ENCODE measurements at regions of chr9 and their contacts with region 1.

Region 1: GRCh38 chr9:75088260-75088905 is at the start of gene OSTF1:
- DNase-seq: peak; percentile 99
- H3K4me3 Mint-ChIP-seq: peak within 1 kb of the TSS; percentile 94
- H3K27ac Mint-ChIP-seq: peak within 1 kb of the TSS; percentile 96
- H3K4me1 Mint-ChIP-seq: peaks cover 56% of the 10 kb centered on the region
- H3K27me3 Mint-ChIP-seq: no peaks in the 10 kb centered on the region
- total RNA-seq, gene OSTF1: 41.5 and 42.4 TPM in 2 replicates

Region 2: GRCh38 chr9:73149371-73150067 is 1938.9 kb before region 1 on chr9:
- intact Hi-C with region 1: loop called (anchors 5 kb)
- DNase-seq: peak; percentile 76
- H3K4me3 Mint-ChIP-seq: peak overlapping the region; percentile 65
- H3K27ac Mint-ChIP-seq: peak overlapping the region; percentile 89
- H3K4me1 Mint-ChIP-seq: peaks cover 54% of the 10 kb centered on the region
- H3K27me3 Mint-ChIP-seq: no peaks in the 10 kb centered on the region

Region 3: DNA sequence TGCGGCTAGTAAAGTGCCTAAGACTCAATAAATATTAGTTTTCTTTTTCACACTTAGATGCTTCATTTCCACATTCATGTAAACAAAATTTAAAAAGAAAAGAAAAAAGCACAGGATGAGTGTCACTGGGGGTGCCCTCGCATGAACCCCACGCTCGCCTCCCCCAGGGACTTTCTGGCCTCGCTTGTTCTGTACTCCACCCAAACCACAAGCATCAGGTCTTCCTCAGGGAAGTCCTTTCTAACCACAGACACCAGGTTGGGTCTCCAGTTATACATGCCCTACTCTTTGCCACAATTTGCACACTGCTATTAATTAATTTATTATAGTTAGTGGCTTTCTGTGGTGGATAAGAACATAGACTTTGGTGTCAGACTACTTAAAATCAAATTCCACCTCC is 498.8 kb before region 1 on chr9:
- intact Hi-C with region 1: no loop called
- DNase-seq: no peak
- H3K4me3 Mint-ChIP-seq: no peak overlapping the region
- H3K27ac Mint-ChIP-seq: no peak overlapping the region
- H3K4me1 Mint-ChIP-seq: no peaks in the 10 kb centered on the region
- H3K27me3 Mint-ChIP-seq: no peaks in the 10 kb centered on the region

Region 4: GRCh38 chr9:74973714-74974113 is 114.7 kb before region 1 on chr9:
- intact Hi-C with region 1: no loop called
- DNase-seq: no peak
- H3K4me3 Mint-ChIP-seq: no peak overlapping the region
- H3K27ac Mint-ChIP-seq: no peak overlapping the region
- H3K4me1 Mint-ChIP-seq: peaks cover 4% of the 10 kb centered on the region
- H3K27me3 Mint-ChIP-seq: no peaks in the 10 kb centered on the region

Region 5: DNA sequence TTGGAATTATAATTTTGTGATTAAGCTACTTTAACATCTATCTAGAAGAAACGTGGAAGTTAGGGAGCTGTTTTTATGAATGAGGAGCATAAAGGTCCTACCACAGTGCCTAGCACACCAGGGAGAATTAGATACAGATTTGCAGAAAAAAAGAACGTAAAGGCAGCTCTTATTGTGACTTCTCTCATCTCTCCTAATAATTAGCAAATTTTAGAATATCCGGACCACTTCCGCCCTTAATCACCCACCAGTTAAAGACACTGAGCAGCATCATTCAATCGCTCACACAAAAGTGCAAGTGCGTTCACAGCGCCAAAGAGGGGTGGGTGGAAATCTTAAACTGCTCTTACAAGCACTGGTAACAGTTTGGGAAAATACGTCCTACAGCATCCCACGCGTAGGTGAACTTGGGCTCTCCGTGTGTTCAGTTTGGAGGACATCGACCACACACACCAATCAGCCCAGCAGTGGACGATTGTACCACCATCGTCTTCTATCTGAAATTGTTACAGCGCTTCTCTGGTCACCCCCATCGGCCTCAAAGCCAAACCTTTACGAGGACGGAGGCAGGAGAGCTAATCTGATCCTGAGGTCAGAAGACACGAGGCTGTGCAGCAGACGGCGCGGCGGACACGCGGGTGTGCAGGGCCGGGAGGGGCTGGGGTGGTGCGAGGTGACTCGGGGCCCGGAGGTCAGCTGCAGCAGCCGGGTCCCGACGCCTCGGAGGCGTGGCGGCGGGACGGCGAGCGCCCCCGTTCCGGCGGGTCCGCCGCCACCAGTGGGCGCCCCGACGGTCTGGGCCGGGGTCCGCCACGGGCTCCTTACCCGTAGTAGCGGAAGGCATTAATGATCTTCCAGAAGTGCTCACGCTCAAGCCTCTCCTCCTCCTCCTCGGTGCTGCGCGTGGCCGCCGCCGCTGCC is 60.9 kb before region 1 on chr9:
- intact Hi-C with region 1: loop called (anchors 1 kb)
- DNase-seq: peak; percentile 86
- H3K4me3 Mint-ChIP-seq: peak overlapping the region; percentile 96
- H3K27ac Mint-ChIP-seq: peak overlapping the region; percentile 99
- H3K4me1 Mint-ChIP-seq: peaks cover 37% of the 10 kb centered on the region
- H3K27me3 Mint-ChIP-seq: peaks cover 2% of the 10 kb centered on the region

Region 6: GRCh38 chr9:75108555-75108954 is 20.2 kb after region 1 on chr9:
- intact Hi-C with region 1: no loop called
- DNase-seq: no peak
- H3K4me3 Mint-ChIP-seq: no peak overlapping the region
- H3K27ac Mint-ChIP-seq: peak overlapping the region; percentile 42
- H3K4me1 Mint-ChIP-seq: peaks cover 33% of the 10 kb centered on the region
- H3K27me3 Mint-ChIP-seq: no peaks in the 10 kb centered on the region

Region 7: DNA sequence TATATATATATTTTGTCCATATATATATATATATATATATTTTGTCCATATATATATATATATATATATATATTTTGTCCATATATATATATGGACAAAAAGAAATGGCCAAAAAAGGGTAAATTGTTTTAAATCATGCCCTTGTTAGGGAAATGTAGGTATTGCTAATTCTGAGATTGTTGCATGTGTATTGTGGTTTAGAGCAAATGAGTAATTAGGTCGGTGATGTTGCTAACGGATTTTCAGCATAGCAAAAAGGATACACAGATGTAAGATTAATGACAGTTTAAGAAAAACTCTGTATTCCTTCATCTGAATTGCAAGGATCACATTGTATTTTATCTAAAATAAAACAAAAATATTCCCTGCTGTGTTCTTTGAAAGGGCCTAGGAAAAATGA is 40.2 kb after region 1 on chr9:
- intact Hi-C with region 1: loop called (anchors 5 kb)
- DNase-seq: no peak
- H3K4me3 Mint-ChIP-seq: no peak overlapping the region
- H3K27ac Mint-ChIP-seq: peak overlapping the region; percentile 52
- H3K4me1 Mint-ChIP-seq: peaks cover 35% of the 10 kb centered on the region
- H3K27me3 Mint-ChIP-seq: no peaks in the 10 kb centered on the region

Region 8: DNA sequence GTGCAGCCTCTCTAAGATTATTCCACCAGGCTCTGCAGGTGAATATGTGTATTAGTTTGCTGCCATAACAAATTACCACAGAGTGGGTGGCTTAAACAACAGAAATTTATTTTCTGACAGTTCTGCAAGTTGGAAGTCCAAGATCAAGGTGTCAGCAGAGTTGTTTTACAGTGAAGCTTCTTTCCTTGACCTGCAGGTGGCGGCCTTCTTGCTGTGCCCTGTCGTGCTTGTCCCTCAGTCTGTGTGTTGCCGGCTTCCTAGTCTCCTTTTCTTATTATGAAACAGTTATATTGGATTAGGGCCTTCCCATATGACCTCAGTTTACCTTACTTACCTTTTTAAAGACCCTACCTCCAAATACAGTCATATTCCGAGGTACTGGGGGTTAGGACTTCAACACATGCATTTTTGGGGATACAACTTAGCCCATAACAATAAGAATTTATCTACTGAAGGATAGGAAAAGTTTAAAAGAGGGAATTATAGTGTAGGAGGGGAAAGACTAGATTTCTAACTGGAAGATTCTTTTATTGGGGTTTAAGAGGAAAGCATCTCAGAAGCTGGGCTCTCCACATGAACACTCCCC is 97.3 kb after region 1 on chr9:
- intact Hi-C with region 1: loop called (anchors 5 kb)
- DNase-seq: peak; percentile 82
- H3K4me3 Mint-ChIP-seq: no peak overlapping the region
- H3K27ac Mint-ChIP-seq: no peak overlapping the region
- H3K4me1 Mint-ChIP-seq: peaks cover 9% of the 10 kb centered on the region
- H3K27me3 Mint-ChIP-seq: peaks cover under 1% of the 10 kb centered on the region

Region 9: GRCh38 chr9:76393963-76394679 is 1305.7 kb after region 1 on chr9 and contains the start of gene RFK:
- intact Hi-C with region 1: loop called (anchors 10 kb)
- DNase-seq: peak; percentile 98
- H3K4me3 Mint-ChIP-seq: peak within 1 kb of the TSS; percentile 97
- H3K27ac Mint-ChIP-seq: peak within 1 kb of the TSS; percentile 99
- H3K4me1 Mint-ChIP-seq: peaks cover 25% of the 10 kb centered on the region
- H3K27me3 Mint-ChIP-seq: no peaks in the 10 kb centered on the region
- total RNA-seq, gene RFK: 16.6 and 17.9 TPM in 2 replicates